HCT116 (cell line): ENCODE measurements at regions of chr11 and their contacts with region 1.

Region 1: DNA sequence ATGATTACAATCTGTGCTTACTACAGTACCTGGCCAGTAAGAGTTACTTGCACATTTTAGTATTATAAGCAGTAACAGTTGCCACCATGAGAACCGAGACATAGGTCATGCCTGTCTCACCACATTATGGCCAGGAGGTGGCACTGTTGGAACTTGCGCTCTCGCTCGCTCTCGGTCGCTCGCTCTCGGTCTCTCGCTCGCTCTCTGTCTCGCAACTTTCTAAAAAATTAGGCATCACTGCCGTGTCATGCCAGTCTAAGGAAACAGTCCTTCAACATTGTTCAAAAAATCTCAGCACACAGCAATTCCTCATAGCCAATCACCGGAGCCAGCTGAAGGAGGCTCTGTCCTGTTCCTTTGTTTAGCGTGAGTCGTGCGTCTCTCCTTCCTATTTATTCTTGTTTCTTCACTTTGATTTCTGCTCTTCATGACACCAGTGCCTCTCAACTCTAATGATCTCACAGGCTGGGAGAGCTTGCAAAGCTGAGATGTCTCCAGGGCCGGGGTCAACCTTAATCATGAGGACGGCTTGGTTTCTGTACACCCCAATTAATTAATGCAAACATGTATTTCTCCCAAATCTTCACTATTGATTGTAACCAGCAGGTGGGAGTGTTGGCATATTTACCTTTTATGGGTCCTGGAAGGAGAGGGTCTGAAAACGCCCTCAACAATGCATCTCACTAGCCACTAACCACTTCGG is 6.3 kb upstream of the ADAMTS8 start:
- DNase-seq: peak; percentile 68
- ATAC-seq: peak; percentile 82
- H3K4me3 ChIP-seq: peak overlapping the region; percentile 58 to 70
- H3K27ac ChIP-seq: no peak overlapping the region
- H3K4me1 ChIP-seq: peaks cover 0 to 3% of the 10 kb centered on the region in 2 experiments; a peak in 1 of 4 replicates
- H3K27me3 ChIP-seq: peaks cover 7% of the 10 kb centered on the region; the same call in 1 of the 2 replicates
- CTCF ChIP-seq: peak; percentile 76 to 97 (median 86)
- POLR2A ChIP-seq: no peak
- RAD21 ChIP-seq: peak; percentile 91

Region 2: GRCh38 chr11:130213143-130213978 is 221.3 kb before region 1 on chr11:
- CTCF ChIA-PET with region 1: interaction called, 18 read pairs
- POLR2A ChIA-PET with region 1: no interaction called
- RAD21 ChIA-PET with region 1: no interaction called
- intact Hi-C with region 1: loop called (anchors 1 kb)
- DNase-seq: peak; percentile 3
- ATAC-seq: peak; percentile 86
- H3K4me3 ChIP-seq: no peak overlapping the region
- H3K27ac ChIP-seq: no peak overlapping the region
- H3K4me1 ChIP-seq: peaks cover 0 to 6% of the 10 kb centered on the region in 2 experiments; a peak in 1 of 4 replicates
- H3K27me3 ChIP-seq: no peaks in the 10 kb centered on the region
- CTCF ChIP-seq: peak; percentile 78 to 95 (median 85)
- POLR2A ChIP-seq: no peak
- RAD21 ChIP-seq: peak; percentile 91

Region 3: GRCh38 chr11:130340671-130341319 is 93.9 kb before region 1 on chr11:
- CTCF ChIA-PET with region 1: no interaction called
- POLR2A ChIA-PET with region 1: no interaction called
- RAD21 ChIA-PET with region 1: no interaction called
- intact Hi-C with region 1: no loop called
- DNase-seq: no peak
- ATAC-seq: no peak
- H3K4me3 ChIP-seq: no peak overlapping the region
- H3K27ac ChIP-seq: no peak overlapping the region
- H3K4me1 ChIP-seq: no peaks in the 10 kb centered on the region
- H3K27me3 ChIP-seq: no peaks in the 10 kb centered on the region
- CTCF ChIP-seq: no peak
- POLR2A ChIP-seq: no peak
- RAD21 ChIP-seq: no peak

Region 4: GRCh38 chr11:130359419-130359818 is 75.3 kb before region 1 on chr11:
- CTCF ChIA-PET with region 1: no interaction called
- POLR2A ChIA-PET with region 1: no interaction called
- RAD21 ChIA-PET with region 1: no interaction called
- intact Hi-C with region 1: no loop called
- DNase-seq: no peak
- ATAC-seq: no peak
- H3K4me3 ChIP-seq: no peak overlapping the region
- H3K27ac ChIP-seq: no peak overlapping the region
- H3K4me1 ChIP-seq: no peaks in the 10 kb centered on the region
- H3K27me3 ChIP-seq: no peaks in the 10 kb centered on the region
- CTCF ChIP-seq: no peak
- POLR2A ChIP-seq: no peak
- RAD21 ChIP-seq: no peak

Region 5: GRCh38 chr11:130499828-130500227 is 65.2 kb after region 1 on chr11:
- CTCF ChIA-PET with region 1: no interaction called
- POLR2A ChIA-PET with region 1: no interaction called
- RAD21 ChIA-PET with region 1: no interaction called
- intact Hi-C with region 1: no loop called
- DNase-seq: no peak
- ATAC-seq: no peak
- H3K4me3 ChIP-seq: no peak overlapping the region
- H3K27ac ChIP-seq: no peak overlapping the region
- H3K4me1 ChIP-seq: no peaks in the 10 kb centered on the region
- H3K27me3 ChIP-seq: no peaks in the 10 kb centered on the region
- CTCF ChIP-seq: no peak
- POLR2A ChIP-seq: no peak
- RAD21 ChIP-seq: no peak

Region 6: DNA sequence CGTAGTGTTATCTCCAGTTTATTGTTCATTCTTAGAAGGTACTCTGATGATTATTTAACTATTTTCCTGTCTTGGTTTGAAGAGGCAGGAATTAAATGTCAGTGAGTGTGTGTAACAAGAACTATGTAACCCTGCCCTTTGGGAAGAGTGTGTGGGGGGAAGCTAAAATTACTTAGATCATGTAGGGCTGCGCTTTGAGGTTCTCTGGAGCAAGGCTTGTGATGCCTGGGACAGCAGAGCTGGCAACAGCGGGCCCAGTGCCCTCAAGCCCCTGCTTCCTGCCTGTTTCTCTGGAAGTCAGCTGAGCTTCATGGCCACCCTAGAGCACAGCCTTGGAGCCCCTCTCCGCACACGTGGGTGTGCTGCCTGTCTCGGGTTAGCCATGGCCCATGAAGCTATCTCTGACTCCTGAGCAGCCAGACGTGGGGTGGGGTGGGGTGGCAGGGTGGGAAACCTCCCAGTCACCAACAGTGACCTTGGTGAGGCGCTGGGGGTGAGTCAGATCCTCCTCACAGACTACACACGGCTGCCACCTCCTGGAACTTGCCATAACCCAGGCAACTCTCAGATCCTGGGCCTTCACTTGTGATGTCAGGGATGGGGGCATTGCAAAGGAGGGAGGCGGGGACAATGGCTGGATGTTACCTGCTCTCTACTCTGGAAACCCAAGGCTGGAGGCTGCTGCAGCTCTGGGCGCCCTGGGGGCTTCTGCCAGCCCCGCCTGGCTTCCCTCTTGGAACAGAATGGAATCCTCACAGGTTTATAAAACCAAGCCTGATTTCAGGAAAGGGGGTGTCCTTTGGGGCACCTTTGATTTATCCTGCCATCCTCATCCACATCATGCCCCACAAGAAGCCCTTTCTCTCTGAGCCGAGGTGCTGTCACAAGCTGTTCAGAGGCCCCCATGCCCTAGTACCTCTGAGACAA is 393.0 kb after region 1 on chr11:
- CTCF ChIA-PET with region 1: interaction called, 12 read pairs
- POLR2A ChIA-PET with region 1: no interaction called
- RAD21 ChIA-PET with region 1: interaction called, 5 to 9 read pairs
- intact Hi-C with region 1: loop called (anchors 1 kb)
- DNase-seq: peak; percentile 50
- ATAC-seq: peak; percentile 96
- H3K4me3 ChIP-seq: no peak overlapping the region
- H3K27ac ChIP-seq: no peak overlapping the region
- H3K4me1 ChIP-seq: no peaks in the 10 kb centered on the region
- H3K27me3 ChIP-seq: no peaks in the 10 kb centered on the region; the same call in none of the 2 replicates
- CTCF ChIP-seq: peak; percentile 46 to 60 (median 51)
- POLR2A ChIP-seq: no peak
- RAD21 ChIP-seq: peak; percentile 75

Region 7: DNA sequence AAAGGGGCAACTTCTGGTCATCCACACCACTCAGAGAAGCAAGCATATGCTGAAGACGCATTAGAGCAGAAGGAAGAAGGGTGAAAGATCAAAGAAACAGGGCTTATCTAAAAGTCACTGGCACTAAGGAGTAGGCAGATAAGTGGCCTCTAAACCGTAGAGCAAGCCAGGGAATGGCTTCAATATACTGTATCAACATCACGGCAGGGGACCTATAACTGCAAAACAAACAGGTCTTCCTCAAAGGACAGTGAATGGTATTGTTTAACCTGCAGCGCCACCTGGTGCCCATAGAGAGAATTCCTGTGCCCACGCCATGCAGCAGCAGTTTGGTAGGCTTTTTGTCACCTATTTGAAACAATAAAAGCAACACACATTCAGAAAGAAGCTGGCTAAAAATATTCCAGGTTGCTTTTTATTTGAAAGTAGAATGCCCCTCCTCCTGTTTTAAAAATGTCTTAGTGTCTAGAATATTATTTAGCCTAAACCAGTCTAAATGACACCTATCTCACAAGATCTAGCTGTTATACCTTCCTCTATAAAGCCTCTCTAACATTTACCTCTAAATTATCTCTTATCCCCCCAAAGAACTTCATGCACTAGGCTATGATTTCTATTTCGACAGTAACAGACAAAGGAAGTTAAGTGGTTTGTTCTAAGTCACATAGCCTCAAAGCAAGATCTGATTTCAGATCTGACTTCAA is 459.8 kb after region 1 on chr11:
- CTCF ChIA-PET with region 1: interaction called, 10 read pairs
- POLR2A ChIA-PET with region 1: no interaction called
- RAD21 ChIA-PET with region 1: interaction called, 3 read pairs
- intact Hi-C with region 1: loop called (anchors 1 kb)
- DNase-seq: peak; percentile 38
- ATAC-seq: peak; percentile 97
- H3K4me3 ChIP-seq: no peak overlapping the region
- H3K27ac ChIP-seq: no peak overlapping the region
- H3K4me1 ChIP-seq: no peaks in the 10 kb centered on the region
- H3K27me3 ChIP-seq: no peaks in the 10 kb centered on the region
- CTCF ChIP-seq: peak; percentile 64 to 94 (median 82); a peak in 5 of 6 replicates
- POLR2A ChIP-seq: no peak
- RAD21 ChIP-seq: peak; percentile 67